ENCODE measurements at regions of chr1 and their contacts with region 1.

Region 1: DNA sequence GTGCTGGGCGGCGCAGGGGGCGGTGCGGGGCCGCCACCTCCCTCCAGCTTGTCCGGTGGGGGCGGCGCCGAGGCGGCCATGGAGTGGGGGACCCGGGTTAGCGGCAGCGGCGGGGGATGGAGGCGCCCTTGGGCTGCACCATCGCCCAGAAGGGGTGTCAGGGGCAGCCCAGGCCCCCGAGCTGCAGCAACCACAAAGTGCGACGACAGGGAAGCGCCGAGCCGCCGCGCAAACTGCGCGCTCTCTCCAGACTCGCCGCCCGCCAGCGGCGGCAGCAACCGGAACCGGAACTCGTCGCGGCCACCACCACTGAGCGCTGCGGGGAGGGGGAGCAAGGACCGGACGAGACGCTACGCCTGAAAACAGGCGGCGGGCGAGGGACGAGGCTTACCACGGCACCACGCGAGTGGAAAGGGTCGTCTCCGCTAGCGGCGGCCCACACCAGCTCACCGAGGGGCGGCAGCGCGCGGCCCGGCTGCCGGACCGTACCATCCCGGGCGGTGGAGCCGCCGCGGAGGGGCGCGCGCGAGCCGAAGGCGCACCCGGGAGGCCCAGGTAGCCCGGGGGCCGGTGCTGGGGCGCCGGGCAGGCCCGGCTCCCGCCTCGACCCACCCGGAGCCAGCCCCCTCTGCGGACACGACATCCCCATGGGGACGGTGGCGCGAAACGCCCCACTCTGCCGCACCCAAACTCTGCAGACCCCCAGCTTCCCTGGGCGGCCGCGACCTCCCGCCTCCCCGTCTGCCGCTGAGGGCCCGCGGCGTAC is at the start of gene PYGO2:
- DNase-seq: peak; percentile 87

Region 2: GRCh38 chr1:154974063-154974807 is 12.6 kb after region 1 on chr1 and contains the start of gene CKS1B:
- CTCF ChIA-PET with region 1: interaction called, 4 read pairs
- POLR2A ChIA-PET with region 1: interaction called, 59 read pairs
- DNase-seq: peak; percentile 94

Region 3: GRCh38 chr1:154982897-154983648 is 21.4 kb after region 1 on chr1 and contains the start of gene FLAD1:
- CTCF ChIA-PET with region 1: interaction called, 3 read pairs
- POLR2A ChIA-PET with region 1: interaction called, 12 read pairs
- DNase-seq: peak; percentile 99